B cell (primary cell): ENCODE measurements at regions of chr16 and their contacts with region 1.

Region 1: GRCh38 chr16:81841722-81842121 is 62.6 kb downstream of the PLCG2 start:
- DNase-seq: peak; percentile 80
- ATAC-seq: peak; percentile 50
- H3K4me3 ChIP-seq: peak overlapping the region in 1 of 5 experiments; percentile 1
- H3K4me3 Mint-ChIP-seq: peak overlapping the region; percentile 67
- H3K27ac ChIP-seq: peak overlapping the region; percentile 77 to 88
- H3K27ac Mint-ChIP-seq: peak overlapping the region; percentile 83
- H3K4me1 ChIP-seq: peaks cover 79 to 84% of the 10 kb centered on the region in 2 donors
- H3K4me1 Mint-ChIP-seq: peaks cover 88% of the 10 kb centered on the region
- H3K27me3 ChIP-seq: no peaks in the 10 kb centered on the region
- H3K27me3 Mint-ChIP-seq: no peaks in the 10 kb centered on the region
- CTCF ChIP-seq: no peak

Region 2: GRCh38 chr16:81855552-81856153 is 13.9 kb after region 1 on chr16:
- CTCF ChIA-PET with region 1: interaction called, 10 read pairs
- POLR2A ChIA-PET with region 1: interaction called, 6 read pairs
- intact Hi-C with region 1: loop called (anchors 2 kb)
- DNase-seq: no peak
- ATAC-seq: no peak
- H3K4me3 ChIP-seq: no peak overlapping the region
- H3K4me3 Mint-ChIP-seq: no peak overlapping the region
- H3K27ac ChIP-seq: peak overlapping the region in 1 of 2 donors; percentile 47
- H3K27ac Mint-ChIP-seq: peak overlapping the region; percentile 69
- H3K4me1 ChIP-seq: peaks cover 22 to 36% of the 10 kb centered on the region in 2 donors
- H3K4me1 Mint-ChIP-seq: peaks cover 49% of the 10 kb centered on the region
- H3K27me3 ChIP-seq: no peaks in the 10 kb centered on the region
- H3K27me3 Mint-ChIP-seq: no peaks in the 10 kb centered on the region
- CTCF ChIP-seq: no peak

Region 3: DNA sequence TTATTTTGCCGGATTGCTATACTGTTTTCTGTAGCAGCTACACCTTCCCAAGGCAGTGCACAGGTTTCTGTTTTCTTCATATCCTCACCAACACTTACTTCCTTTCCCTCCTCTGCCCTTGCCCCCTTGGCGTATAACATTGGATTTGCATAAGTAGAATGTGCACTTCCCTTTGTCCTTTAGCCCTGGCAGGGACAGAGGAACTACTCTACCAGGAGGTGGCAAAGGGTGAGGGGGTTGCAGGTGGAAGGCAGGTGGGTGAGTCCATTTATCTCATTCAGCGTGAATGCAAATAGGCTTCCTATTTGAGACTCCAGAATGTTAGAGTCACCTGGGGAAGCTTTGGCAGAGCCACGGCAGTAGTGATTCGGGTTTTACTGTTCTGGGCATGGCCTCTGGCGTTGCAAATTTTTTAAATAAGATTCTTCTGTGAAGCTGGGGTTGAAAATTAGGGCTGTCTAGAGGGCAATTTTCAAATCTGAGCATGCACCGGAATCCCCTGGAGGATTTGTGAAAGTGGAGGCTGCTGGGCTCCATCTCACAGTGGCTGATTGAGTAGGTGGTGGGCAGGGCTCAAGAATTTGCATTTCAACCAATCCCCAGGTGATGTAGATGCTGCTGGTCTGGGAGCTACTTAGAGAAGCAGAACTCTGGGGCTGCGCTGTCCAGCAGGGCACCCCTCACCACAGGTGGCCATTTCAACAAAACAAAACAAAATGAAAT is 22.1 kb after region 1 on chr16:
- CTCF ChIA-PET with region 1: interaction called, 12 read pairs
- POLR2A ChIA-PET with region 1: interaction called, 3 read pairs
- intact Hi-C with region 1: no loop called
- DNase-seq: peak; percentile 74
- ATAC-seq: peak; percentile 75
- H3K4me3 ChIP-seq: peak overlapping the region in 3 of 5 experiments; percentile 1 to 23 (median 10)
- H3K4me3 Mint-ChIP-seq: peak overlapping the region; percentile 46
- H3K27ac ChIP-seq: peak overlapping the region; percentile 57 to 72
- H3K27ac Mint-ChIP-seq: peak overlapping the region; percentile 68
- H3K4me1 ChIP-seq: peaks cover 58 to 60% of the 10 kb centered on the region in 2 donors
- H3K4me1 Mint-ChIP-seq: peaks cover 73% of the 10 kb centered on the region
- H3K27me3 ChIP-seq: no peaks in the 10 kb centered on the region
- H3K27me3 Mint-ChIP-seq: no peaks in the 10 kb centered on the region
- CTCF ChIP-seq: no peak